Vagina (tissue), 2 donors: ENCODE measurements at regions of chr3 and their contacts with region 1.

Region 1: GRCh38 chr3:62119151-62119550 is 254.2 kb downstream of the FEZF2 start:
- DNase-seq: no peak
- H3K4me3 ChIP-seq: no peak overlapping the region
- H3K27ac ChIP-seq: no peak overlapping the region
- H3K4me1 ChIP-seq: no peaks in the 10 kb centered on the region
- H3K27me3 ChIP-seq: no peaks in the 10 kb centered on the region
- CTCF ChIP-seq: no peak
- POLR2A ChIP-seq: no peak

Region 2: DNA sequence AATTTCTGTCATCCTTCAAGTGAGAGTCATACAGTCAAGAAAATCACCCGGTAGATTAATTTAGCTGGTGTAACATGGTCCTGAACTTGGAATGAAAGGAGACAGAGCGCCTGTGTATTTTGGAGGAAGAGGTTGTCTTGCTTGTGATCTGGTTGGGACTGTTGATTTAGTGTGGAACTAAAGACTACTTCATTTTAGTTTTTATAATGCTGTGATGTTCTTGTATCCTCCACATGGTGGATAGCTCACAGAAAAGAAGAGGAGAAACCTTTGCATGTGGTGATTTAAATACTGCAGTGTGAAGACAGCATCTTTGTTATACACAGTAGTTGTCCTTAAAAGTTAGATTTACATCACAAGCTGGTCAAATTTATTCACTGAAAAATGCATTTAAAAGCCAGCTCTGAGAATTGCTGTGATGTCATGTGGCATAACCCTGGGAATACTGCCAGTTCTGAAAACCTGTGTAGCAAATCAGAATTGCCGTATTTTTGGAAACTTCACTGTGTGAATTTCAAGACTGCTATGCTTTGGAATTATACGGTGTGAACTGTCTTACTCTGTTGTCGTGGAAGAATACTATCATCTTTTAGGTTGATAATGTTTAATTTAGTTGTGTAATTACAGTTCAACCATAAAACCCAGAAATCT is 289.3 kb before region 1 on chr3:
- intact Hi-C with region 1: no loop called
- DNase-seq: no peak
- H3K4me3 ChIP-seq: no peak overlapping the region
- H3K27ac ChIP-seq: peak overlapping the region; percentile 18
- H3K4me1 ChIP-seq: no peaks in the 10 kb centered on the region
- H3K27me3 ChIP-seq: no peaks in the 10 kb centered on the region
- CTCF ChIP-seq: no peak
- POLR2A ChIP-seq: no peak

Region 3: GRCh38 chr3:61927332-61927731 is 191.8 kb before region 1 on chr3:
- intact Hi-C with region 1: no loop called
- DNase-seq: no peak
- H3K4me3 ChIP-seq: no peak overlapping the region
- H3K27ac ChIP-seq: peak overlapping the region; percentile 64
- H3K4me1 ChIP-seq: peaks cover 60% of the 10 kb centered on the region
- H3K27me3 ChIP-seq: no peaks in the 10 kb centered on the region
- CTCF ChIP-seq: no peak
- POLR2A ChIP-seq: no peak

Region 4: DNA sequence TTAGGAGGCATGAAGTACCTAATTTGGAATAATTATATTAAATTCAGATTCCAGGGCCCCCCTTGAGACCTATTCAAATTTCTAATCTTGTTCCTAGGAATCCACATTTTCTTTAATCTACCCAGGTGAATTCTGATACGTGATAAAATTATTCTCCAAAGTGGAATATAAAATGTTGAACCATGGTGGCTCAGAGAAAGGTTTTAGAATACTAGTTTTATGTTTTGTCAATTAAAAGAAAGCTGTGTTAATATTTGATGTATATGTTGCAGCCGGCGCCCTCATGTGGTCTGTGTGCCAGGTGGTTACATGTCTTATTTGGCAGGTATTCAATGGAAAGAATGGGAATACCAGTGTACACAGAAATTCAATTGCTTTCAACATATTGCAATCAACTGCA is 67.6 kb before region 1 on chr3:
- intact Hi-C with region 1: no loop called
- DNase-seq: no peak
- H3K4me3 ChIP-seq: no peak overlapping the region
- H3K27ac ChIP-seq: no peak overlapping the region
- H3K4me1 ChIP-seq: no peaks in the 10 kb centered on the region
- H3K27me3 ChIP-seq: no peaks in the 10 kb centered on the region
- CTCF ChIP-seq: no peak
- POLR2A ChIP-seq: no peak

Region 5: GRCh38 chr3:62574266-62574898 is 455.2 kb after region 1 on chr3:
- intact Hi-C with region 1: loop called (anchors 10 kb)
- DNase-seq: no peak
- H3K4me3 ChIP-seq: no peak overlapping the region
- H3K27ac ChIP-seq: no peak overlapping the region
- H3K4me1 ChIP-seq: no peaks in the 10 kb centered on the region
- H3K27me3 ChIP-seq: no peaks in the 10 kb centered on the region
- CTCF ChIP-seq: no peak
- POLR2A ChIP-seq: no peak